ENCODE measurements at regions of chr4 and their contacts with region 1.

Region 1: DNA sequence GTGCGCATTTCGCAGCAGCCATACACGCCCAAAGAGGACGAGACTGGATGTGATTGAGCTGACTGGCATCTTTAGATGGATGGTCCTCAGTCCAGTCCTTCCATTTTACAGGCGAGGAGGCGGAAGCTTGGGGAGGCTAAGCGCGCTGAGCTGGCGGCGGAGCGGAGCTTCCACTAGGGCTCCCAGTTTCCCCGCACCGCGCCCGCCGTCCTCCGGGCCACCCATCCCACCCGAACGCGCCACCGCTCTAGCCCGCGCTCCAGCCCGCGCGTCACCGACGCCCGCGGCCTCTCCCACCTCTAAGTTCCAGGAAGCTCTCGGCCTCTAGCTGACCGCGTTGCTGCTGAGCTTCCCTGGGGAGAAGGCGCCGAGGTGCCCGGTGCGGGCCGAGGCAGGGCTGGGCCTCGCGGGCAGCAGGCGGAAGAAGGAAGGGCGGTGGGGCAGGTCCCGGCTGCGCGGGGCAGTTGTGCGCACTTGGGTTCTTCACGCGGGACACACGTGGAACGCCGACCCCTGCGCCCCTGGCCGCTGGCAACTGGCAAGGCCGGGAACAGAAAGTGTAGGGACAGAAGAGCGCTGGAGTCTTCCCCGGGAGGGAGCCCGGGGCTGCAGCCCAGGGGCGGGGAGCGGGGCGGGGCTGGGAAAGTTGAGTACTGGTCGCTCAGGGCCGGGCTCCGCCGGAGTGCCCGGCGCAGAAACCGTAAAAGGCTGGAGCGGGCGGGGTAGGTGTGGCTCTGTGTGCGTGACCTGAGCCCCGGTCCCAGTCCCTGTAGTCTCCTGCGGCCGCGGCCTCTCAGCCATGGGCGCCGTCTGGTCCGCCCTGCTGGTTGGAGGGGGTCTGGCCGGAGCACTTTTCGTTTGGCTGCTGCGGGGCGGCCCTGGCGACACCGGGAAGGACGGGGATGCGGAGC is at the start of gene STBD1:
- DNase-seq: no peak
- H3K4me3 ChIP-seq: peak within 1 kb of the TSS; percentile 63 to 95 (median 73)
- H3K27ac ChIP-seq: peak within 1 kb of the TSS; percentile 88 to 90 (median 90)
- H3K4me1 ChIP-seq: peaks cover 28 to 52% (median 45%) of the 10 kb centered on the region in 4 donors
- H3K27me3 ChIP-seq: no peaks in the 10 kb centered on the region
- CTCF ChIP-seq: no peak
- EP300 ChIP-seq: no peak
- POLR2A ChIP-seq: peak; percentile 54
- total RNA-seq, gene STBD1: 14.8 to 30.2 (median 17.7) TPM

Region 2: DNA sequence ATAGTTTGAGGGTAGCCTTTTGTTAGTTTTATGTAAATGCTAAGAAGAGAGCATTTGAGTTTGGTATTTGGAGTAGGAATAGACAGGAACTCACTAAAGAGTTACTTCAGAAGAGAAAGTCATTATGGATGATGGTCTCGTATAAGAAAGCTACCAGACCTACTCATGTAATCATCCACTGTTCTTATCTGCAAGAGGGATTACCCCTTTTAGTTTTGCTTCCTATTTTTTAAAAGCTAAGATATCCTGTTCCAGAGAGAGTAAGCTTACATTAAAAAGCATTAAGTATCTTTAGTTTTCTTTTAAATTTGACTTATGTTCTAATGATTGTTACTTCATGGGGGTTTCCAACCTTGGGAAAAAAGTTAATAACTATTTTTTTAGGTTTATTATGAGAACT is 244.2 kb before region 1 on chr4:
- intact Hi-C with region 1: no loop called
- DNase-seq: no peak
- H3K4me3 ChIP-seq: no peak overlapping the region
- H3K27ac ChIP-seq: no peak overlapping the region
- H3K4me1 ChIP-seq: no peaks in the 10 kb centered on the region
- H3K27me3 ChIP-seq: no peaks in the 10 kb centered on the region
- CTCF ChIP-seq: no peak
- EP300 ChIP-seq: no peak
- POLR2A ChIP-seq: no peak

Region 3: GRCh38 chr4:76251441-76252270 is 54.6 kb before region 1 on chr4 and contains the start of gene FAM47E:
- intact Hi-C with region 1: loop called (anchors 5 kb)
- DNase-seq: no peak
- H3K4me3 ChIP-seq: peak within 1 kb of the TSS; percentile 67 to 77 (median 70)
- H3K27ac ChIP-seq: peak within 1 kb of the TSS; percentile 10 to 53 (median 44)
- H3K4me1 ChIP-seq: peaks cover 3 to 17% (median 15%) of the 10 kb centered on the region in 4 donors
- H3K27me3 ChIP-seq: no peaks in the 10 kb centered on the region
- CTCF ChIP-seq: peak; percentile 34 to 55 (median 38)
- EP300 ChIP-seq: no peak
- POLR2A ChIP-seq: no peak
- total RNA-seq, gene FAM47E: 2.0 to 2.2 (median 2.1) TPM

Region 4: DNA sequence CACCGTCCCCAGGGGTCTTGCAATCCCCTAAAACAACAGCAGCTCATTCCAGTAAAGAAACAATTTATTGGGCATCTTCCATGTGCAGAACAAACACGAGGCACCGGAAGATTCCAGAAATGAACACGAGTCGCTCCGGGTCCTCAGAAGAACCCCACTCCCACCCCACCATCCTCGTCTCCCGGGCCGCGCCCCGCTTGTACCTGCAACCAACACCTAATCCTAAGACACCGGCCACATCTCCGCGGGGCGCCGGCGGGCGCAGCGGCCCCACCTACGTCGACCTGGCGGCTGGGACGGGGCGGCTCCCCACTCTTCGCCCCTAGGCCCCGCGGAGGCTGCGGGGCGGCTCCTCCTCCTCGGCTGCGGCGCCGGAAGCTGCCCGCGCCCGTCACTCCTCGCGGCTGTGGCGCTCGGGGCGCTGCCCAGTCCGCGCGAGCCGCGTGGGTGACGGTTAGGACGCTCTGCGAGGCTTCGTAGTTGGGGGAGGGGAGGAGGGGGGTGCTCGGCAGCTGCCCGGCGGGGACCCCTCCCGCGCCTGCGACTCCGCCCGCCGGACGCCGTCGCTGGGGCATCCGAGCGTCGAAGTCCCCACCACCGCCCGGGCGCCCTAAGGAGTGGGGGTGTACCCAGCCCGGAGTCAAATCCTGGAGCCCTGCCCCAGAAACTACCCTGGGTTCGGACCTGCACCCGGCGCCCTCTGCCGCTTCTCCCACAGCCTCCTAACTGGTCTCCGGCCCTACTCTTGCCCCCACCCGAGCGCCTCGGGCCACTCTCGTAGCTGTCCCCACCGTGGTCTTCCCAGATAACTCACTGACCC is 114.7 kb after region 1 on chr4 and contains the start of gene CCDC158:
- intact Hi-C with region 1: loop called (anchors 5 kb)
- DNase-seq: no peak
- H3K4me3 ChIP-seq: peak within 1 kb of the TSS; percentile 68 to 78 (median 68)
- H3K27ac ChIP-seq: peak within 1 kb of the TSS; percentile 51 to 71 (median 59)
- H3K4me1 ChIP-seq: peaks cover 0 to 22% (median 19%) of the 10 kb centered on the region in 4 donors
- H3K27me3 ChIP-seq: peaks cover 0 to 9% (median 0%) of the 10 kb centered on the region in 4 donors
- CTCF ChIP-seq: no peak
- EP300 ChIP-seq: no peak
- POLR2A ChIP-seq: no peak
- total RNA-seq, gene CCDC158: 0.66 to 1.8 (median 1.3) TPM

Region 5: GRCh38 chr4:76689241-76689817 is 383.1 kb after region 1 on chr4:
- intact Hi-C with region 1: no loop called
- DNase-seq: no peak
- H3K4me3 ChIP-seq: peak overlapping the region; percentile 63 to 81 (median 71)
- H3K27ac ChIP-seq: peak overlapping the region; percentile 85 to 89 (median 87)
- H3K4me1 ChIP-seq: peaks cover 31 to 66% (median 60%) of the 10 kb centered on the region in 4 donors
- H3K27me3 ChIP-seq: no peaks in the 10 kb centered on the region
- CTCF ChIP-seq: no peak
- EP300 ChIP-seq: no peak
- POLR2A ChIP-seq: no peak

Region 6: GRCh38 chr4:77454858-77455257 is 1148.6 kb after region 1 on chr4:
- intact Hi-C with region 1: no loop called
- DNase-seq: no peak
- H3K4me3 ChIP-seq: no peak overlapping the region
- H3K27ac ChIP-seq: no peak overlapping the region
- H3K4me1 ChIP-seq: peaks cover 0 to 18% (median 14%) of the 10 kb centered on the region in 4 donors
- H3K27me3 ChIP-seq: no peaks in the 10 kb centered on the region
- CTCF ChIP-seq: no peak
- EP300 ChIP-seq: no peak
- POLR2A ChIP-seq: no peak

Measured in esophagus muscularis mucosa (tissue), 4 donors.